Transverse colon (tissue), 4 donors: ENCODE measurements at regions of chr12 and their contacts with region 1.

Region 1: DNA sequence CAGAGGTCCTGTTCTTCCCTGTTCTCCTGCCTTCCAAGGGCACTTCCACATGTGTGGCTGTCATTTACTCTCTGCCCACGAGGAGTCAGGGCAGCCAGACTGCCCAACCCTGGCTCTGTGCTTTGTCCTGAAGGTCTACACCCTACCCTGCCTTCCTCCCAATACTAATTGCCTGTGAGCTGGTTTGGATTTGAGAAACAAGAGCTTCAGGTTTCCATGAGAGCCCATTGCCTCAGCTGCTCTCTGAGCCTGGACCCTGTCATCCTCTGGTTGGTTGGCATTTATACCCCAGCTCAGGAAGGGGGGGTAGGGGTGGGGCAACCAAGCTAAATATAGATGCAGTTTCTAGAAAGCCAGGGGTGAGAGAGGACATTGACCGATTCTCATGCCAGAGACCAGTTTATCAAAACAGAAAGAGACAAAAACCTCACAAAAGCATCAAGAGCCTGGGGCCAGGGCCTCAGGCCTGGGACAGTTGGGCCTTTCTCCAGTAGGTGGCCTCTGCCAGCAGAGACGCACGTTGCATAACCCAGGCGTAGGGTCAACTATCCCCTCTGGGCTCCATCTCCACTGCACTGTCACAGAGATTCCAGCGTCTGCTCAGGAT is 34.5 kb downstream of the VDR start:
- DNase-seq: peak; percentile 62
- H3K4me3 ChIP-seq: no peak overlapping the region
- H3K27ac ChIP-seq: peak overlapping the region; percentile 10 to 71 (median 38)
- H3K4me1 ChIP-seq: peaks cover 0 to 16% (median 12%) of the 10 kb centered on the region in 4 donors
- H3K27me3 ChIP-seq: no peaks in the 10 kb centered on the region
- CTCF ChIP-seq: peak; percentile 10 to 45 (median 38)
- EP300 ChIP-seq: no peak
- POLR2A ChIP-seq: no peak

Region 2: DNA sequence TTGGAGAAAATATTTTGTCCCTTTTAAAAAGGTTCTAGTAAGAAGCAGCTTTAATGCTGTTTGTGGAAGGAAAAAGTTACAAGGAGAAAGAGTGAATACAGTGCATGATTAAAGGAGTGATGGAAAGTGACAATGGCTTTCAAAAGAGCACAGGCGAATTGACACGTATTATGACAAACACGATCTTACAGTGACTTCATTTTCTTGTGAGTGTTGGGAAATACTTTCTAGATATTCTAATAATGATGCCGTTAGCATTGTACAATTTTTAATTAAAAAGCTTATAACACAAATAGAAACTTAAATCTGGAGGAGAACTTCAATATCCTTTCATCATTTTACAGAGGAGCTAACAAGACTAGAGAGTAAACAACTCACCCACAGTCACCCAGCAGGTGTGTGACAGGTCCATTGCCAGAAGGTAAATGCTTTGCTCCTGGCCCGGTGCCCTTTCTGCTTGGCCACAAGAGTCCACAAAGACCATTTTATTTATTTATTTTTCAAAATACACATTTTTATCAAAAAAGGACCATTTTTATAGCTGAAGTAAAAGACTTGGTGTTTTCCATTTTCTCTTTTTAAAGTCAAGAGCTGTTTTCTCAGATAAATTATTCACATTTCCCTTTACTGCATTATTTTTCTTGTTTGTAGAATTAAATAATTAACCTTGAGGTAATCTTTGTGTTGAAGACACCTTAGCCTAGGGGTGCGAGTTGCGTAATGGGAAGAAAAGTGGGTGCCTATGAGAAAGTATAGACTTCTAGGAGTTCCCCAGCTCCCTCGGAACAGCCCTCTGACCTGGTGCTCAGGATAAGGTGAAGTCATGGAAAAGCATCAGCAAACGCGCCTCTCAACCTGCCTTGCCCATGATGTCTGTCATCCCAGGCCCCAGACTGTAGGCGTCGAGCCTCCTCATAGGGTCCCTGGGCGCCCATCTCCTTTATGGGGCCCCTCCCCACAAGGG is 764.3 kb before region 1 on chr12:
- in situ Hi-C with region 1: no loop called
- intact Hi-C with region 1: loop called (anchors 2 kb)
- DNase-seq: peak; percentile 19
- H3K4me3 ChIP-seq: no peak overlapping the region
- H3K27ac ChIP-seq: no peak overlapping the region
- H3K4me1 ChIP-seq: no peaks in the 10 kb centered on the region
- H3K27me3 ChIP-seq: no peaks in the 10 kb centered on the region
- CTCF ChIP-seq: no peak
- EP300 ChIP-seq: no peak
- POLR2A ChIP-seq: no peak